ENCODE measurements at regions of chr12 and their contacts with region 1.

Region 1: DNA sequence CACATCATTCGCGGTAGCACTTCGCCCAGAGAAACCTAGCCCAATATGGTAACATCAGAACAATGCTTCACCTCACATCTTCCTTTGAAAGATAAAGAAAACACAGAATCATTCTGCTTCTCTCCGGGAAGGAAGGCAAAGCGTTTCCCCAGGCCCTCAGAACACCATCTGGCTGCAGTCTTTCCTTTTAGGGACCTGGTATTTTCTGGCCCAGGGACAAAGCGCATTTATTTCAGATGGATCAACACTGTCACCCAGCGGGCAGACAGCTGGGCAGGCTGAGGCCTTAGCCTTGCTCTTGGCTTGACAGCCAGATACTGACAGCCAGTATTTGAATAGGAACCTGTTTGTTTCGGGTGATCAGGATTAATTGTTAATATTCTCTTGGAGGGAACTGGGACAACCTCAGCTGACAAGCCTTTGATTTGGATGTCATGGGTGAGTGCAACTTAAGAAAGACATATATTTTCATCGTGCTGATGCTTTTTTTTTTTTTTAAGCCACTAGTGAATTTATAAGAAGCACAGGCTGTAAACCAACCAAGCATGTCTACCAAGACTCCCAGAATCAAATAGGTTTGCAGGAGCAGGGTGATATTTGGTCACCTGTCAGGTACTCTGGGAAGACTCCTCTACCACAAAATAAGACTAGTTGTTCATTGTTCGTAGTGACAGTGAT is 118.9 kb downstream of the VEZT start:
- DNase-seq: no peak
- H3K4me3 ChIP-seq: peak overlapping the region; percentile 4 to 40 (median 30)
- H3K27ac ChIP-seq: peak overlapping the region; percentile 81 to 86 (median 83)
- H3K4me1 ChIP-seq: peaks cover 10 to 44% (median 39%) of the 10 kb centered on the region in 4 donors
- H3K27me3 ChIP-seq: no peaks in the 10 kb centered on the region
- CTCF ChIP-seq: peak; percentile 64 to 74 (median 68)
- EP300 ChIP-seq: no peak
- POLR2A ChIP-seq: no peak

Region 2: DNA sequence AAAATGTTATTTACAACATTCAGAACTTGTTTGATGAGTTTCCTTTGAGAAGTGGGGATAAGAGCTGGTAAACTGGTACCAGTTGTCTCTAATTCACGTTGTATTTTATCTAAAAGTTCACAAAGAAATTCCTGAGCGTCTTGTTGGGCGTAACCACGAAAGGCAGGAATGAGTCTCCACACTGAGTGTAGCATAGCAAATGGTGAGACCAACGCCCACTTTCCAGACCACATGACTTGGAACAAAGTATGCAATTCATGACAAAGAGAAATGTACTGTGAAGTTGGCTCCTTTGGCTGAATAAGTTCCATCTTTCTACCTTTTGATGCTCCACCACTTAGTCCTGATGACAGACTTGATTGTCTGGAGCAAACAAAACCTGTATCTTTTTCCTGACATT is 196.3 kb after region 1 on chr12:
- intact Hi-C with region 1: loop called (anchors 10 kb)
- DNase-seq: no peak
- H3K4me3 ChIP-seq: no peak overlapping the region
- H3K27ac ChIP-seq: no peak overlapping the region
- H3K4me1 ChIP-seq: peaks cover 0 to 13% (median 11%) of the 10 kb centered on the region in 4 donors
- H3K27me3 ChIP-seq: no peaks in the 10 kb centered on the region
- CTCF ChIP-seq: no peak
- EP300 ChIP-seq: no peak
- POLR2A ChIP-seq: no peak